A673 (cell line): ENCODE measurements at regions of chr12 and their contacts with region 1.

Region 1: DNA sequence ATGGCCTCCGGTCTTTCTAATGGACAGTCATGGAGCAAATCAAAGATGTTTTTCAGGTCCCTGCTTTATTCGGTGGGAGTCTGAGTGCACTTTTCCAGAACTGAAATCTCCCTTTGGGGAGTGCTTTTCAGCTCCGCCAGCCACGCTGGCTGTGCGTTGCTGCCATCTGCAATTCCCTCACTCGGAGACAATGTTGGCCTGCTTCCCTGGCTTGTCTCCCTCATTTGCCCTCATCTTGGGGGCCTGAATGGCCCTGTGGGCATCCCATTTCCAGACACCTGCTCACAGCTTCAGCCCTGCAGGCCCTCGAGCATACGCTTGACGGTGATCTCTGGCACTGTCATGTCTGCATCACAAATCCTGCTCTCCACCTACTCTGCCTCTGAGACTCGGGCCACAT is 103.8 kb downstream of the CCDC92 start:
- DNase-seq: no peak
- H3K4me3 ChIP-seq: no peak overlapping the region
- H3K27ac ChIP-seq: no peak overlapping the region
- H3K4me1 ChIP-seq: peaks cover 7% of the 10 kb centered on the region
- H3K27me3 ChIP-seq: no peaks in the 10 kb centered on the region
- CTCF ChIP-seq: no peak

Region 2: GRCh38 chr12:123050331-123050831 is 818.4 kb before region 1 on chr12:
- CTCF ChIA-PET with region 1: interaction called, 10 read pairs
- POLR2A ChIA-PET with region 1: no interaction called
- intact Hi-C with region 1: no loop called
- DNase-seq: no peak
- H3K4me3 ChIP-seq: no peak overlapping the region
- H3K27ac ChIP-seq: no peak overlapping the region
- H3K4me1 ChIP-seq: peaks cover 15% of the 10 kb centered on the region
- H3K27me3 ChIP-seq: no peaks in the 10 kb centered on the region
- CTCF ChIP-seq: no peak

Region 3: GRCh38 chr12:124097701-124098100 is 228.9 kb after region 1 on chr12:
- CTCF ChIA-PET with region 1: no interaction called
- POLR2A ChIA-PET with region 1: no interaction called
- intact Hi-C with region 1: no loop called
- DNase-seq: no peak
- H3K4me3 ChIP-seq: no peak overlapping the region
- H3K27ac ChIP-seq: no peak overlapping the region
- H3K4me1 ChIP-seq: no peaks in the 10 kb centered on the region
- H3K27me3 ChIP-seq: peaks cover 18% of the 10 kb centered on the region
- CTCF ChIP-seq: no peak